ENCODE measurements at regions of chr1 and their contacts with region 1.

Region 1: DNA sequence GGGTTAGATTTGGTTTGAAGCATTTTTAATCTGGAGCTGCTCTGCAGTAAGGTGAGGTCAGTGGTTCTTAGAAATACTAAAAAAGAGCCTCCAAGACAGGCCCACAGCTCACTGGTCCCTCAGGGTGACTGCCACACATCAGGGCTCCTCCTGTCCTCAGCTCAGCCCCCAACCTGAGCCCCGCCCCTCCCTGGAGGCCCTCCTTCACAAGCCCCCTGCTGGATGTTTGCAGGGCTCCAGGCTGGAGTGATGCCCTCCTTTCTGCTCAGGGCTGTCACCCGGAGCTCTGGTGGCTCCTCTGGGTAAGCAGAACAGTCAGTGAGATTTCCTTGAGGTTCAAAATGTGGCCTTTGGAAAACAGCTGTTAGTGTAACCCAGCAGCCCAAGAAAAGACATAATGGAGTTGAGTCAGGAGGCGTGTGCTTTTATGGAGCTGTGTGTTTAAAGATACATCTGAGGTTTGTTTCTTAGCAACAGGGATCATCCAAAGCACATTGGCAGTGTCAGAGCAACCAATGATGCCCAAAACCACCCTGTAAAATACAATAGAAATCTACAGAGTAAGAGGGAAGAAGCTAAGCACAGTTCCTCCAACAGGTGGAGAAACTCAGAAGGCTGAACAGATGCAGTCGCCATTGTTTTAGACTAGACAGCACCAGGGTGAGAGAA is 21.4 kb downstream of the STUM start:
- DNase-seq: peak in 7 of 42 donors; percentile 23 to 57 (median 46)

Region 2: DNA sequence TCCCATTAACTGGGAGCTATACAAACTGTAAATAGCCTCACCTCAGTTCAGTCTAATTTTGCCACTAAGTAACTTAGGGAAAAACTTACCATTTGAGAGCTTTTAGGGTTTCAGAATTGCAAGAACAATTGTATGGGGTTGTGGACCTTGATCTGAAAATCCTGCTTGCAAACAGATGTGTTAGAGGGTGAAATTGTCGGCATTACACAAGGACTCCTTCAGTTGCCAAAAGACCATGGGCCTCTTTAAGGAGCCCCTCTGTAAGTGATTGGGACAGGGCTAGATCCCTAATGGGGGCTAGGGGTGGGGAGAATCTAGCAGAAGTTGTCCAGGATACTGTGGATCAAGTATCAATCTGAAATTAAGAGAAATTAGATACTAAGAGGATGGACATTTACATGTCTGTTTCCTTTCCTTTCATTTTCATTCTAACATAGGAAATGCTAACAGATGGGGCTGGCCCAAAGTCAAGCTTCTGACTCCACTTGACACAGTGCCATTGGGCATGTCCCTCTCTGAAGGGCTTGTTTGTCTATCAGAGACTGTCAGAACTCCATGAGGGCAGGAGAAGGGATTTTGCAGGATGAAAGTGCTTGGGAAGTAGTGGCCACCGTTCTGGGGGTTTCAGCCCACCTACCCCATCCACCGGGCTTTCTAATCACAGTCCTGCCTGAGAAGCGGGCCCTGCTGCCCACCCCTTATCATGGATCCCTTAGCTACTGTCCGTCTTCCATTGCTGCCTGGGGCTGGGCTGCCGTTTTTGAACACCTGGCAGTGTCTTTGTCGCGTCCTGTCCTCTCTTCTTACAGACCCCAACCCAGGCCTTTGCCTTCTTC is 33.2 kb after region 1 on chr1:
- intact Hi-C with region 1: loop called (anchors 5 kb)
- DNase-seq: peak in 40 of 42 donors; percentile 44 to 91 (median 75)

Measured in head of caudate nucleus (tissue), 42 donors.